ENCODE measurements at regions of chr13 and their contacts with region 1.

Region 1: DNA sequence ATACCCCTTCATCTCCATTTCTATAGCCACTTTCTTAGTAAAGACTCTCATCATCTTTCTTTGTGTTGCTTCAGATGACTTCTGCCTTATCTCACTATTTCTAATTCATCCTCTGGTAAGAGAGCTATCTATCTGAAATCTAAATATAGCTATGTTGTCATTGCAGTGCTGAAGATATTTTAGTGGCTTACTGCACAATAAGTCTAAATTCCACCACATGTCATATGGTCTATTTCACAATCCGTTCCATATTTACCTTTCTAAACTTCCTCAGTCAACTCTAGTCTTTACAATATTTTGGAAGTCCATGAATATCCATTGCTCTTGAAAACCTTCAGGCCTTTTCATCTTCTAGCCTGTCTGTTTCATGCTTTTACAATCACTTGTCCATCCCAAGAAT is 465.1 kb upstream of the SLC10A2 start:
- DNase-seq: no peak
- ATAC-seq: no peak
- H3K4me3 ChIP-seq: no peak overlapping the region
- H3K27ac ChIP-seq: no peak overlapping the region
- H3K4me1 ChIP-seq: no peaks in the 10 kb centered on the region
- H3K27me3 ChIP-seq: no peaks in the 10 kb centered on the region
- CTCF ChIP-seq: no peak
- EP300 ChIP-seq: no peak
- POLR2A ChIP-seq: no peak
- RAD21 ChIP-seq: no peak

Region 2: DNA sequence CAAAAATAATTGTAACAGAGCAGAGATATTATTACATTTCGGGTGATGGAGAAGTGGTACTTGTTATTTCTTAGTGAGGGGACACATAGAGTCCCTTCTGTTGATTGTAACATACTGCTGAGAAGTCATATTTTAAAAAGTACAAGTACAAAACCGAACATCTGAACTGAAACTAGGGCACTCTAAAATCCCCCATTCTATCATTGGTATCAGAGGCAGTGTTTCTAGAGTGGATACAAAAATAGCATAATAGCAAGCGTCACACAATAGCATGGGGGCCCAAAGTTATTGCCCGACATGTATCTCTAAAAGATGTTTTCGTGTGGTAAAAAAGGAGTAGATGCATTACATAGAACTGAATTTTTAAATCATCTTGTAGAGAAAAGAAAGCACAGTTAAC is 37.0 kb after region 1 on chr13:
- CTCF ChIA-PET with region 1: no interaction called
- POLR2A ChIA-PET with region 1: no interaction called
- in situ Hi-C with region 1: no loop called
- intact Hi-C with region 1: no loop called
- DNase-seq: no peak
- ATAC-seq: no peak
- H3K4me3 ChIP-seq: no peak overlapping the region
- H3K27ac ChIP-seq: no peak overlapping the region
- H3K4me1 ChIP-seq: no peaks in the 10 kb centered on the region
- H3K27me3 ChIP-seq: no peaks in the 10 kb centered on the region
- CTCF ChIP-seq: no peak
- EP300 ChIP-seq: no peak
- POLR2A ChIP-seq: no peak
- RAD21 ChIP-seq: no peak

Region 3: DNA sequence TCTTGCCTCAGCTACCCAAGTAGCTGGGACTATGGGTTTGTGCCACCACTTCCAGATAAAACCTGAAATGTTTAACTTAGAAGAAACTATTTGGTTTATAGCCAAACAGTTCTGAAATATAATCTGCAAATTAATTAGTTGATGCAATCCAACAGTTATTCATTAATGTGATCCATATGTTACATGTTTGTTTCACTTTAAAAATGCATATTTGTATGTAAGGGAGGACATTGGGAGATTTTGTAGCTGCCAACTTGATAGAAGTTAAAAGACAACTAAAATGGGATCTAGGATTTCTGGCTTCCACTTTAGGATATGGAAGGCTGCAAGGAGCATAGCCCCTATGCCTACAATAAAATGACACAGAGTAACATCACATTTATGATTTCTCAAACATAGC is 67.4 kb after region 1 on chr13:
- CTCF ChIA-PET with region 1: no interaction called
- POLR2A ChIA-PET with region 1: no interaction called
- in situ Hi-C with region 1: no loop called
- intact Hi-C with region 1: no loop called
- DNase-seq: no peak
- ATAC-seq: no peak
- H3K4me3 ChIP-seq: no peak overlapping the region
- H3K27ac ChIP-seq: no peak overlapping the region
- H3K4me1 ChIP-seq: no peaks in the 10 kb centered on the region
- H3K27me3 ChIP-seq: no peaks in the 10 kb centered on the region
- CTCF ChIP-seq: no peak
- EP300 ChIP-seq: no peak
- POLR2A ChIP-seq: no peak
- RAD21 ChIP-seq: no peak

Region 4: GRCh38 chr13:103812971-103813370 is 281.7 kb after region 1 on chr13:
- CTCF ChIA-PET with region 1: no interaction called
- POLR2A ChIA-PET with region 1: no interaction called
- in situ Hi-C with region 1: no loop called
- intact Hi-C with region 1: loop called (anchors 5 kb)
- DNase-seq: no peak
- ATAC-seq: no peak
- H3K4me3 ChIP-seq: no peak overlapping the region
- H3K27ac ChIP-seq: no peak overlapping the region
- H3K4me1 ChIP-seq: no peaks in the 10 kb centered on the region
- H3K27me3 ChIP-seq: no peaks in the 10 kb centered on the region
- CTCF ChIP-seq: no peak
- EP300 ChIP-seq: no peak
- POLR2A ChIP-seq: no peak
- RAD21 ChIP-seq: no peak

Measured in K562 (cell line).